ENCODE measurements at regions of chr15 and their contacts with region 1.

Region 1: DNA sequence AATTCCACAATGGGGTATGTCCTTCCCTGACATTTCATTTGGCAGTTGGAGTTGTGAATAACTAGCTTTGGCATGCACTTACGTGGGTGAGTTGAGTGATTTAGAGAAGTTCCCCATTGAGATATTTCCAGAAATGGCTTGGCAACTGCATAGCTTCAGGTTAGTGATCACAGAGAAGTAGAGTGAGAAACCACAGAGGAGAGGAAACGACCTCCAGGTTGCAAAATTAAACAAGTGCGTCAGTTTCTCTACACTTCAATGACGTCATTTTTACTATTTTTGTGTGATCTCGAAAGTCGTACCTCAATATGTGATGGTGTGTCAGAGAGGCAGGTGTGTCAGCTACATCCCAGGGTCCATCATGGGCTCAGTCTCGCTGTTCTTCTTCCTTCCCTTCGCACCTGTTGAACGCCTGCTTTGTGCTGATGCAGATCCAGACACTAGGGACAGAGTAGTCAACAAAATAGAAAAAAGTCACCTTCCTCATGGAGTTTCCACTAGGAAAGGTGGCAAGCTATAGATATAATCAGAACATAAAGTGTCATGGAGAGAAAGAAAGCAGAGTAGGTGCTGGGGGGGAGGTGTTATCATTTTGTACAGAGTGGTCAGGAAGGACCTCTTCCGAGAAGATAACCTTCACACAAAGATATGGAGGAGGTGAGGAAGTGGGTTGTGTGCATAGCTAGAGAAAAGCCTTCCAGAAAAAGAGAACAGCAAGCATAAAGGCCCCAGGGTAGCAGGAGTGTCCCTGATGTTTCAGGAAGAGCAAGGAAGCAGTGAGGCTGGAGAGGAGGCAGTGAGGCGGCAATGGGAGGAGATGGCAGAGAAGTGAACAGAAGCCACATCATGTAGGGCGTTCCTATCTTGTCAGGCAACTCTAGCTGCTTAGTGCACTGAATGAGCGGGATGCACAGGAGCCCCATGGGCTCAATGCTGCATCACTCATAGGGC is 75.6 kb downstream of the MCTP2 start:
- DNase-seq: peak; percentile 73
- ATAC-seq: peak; percentile 58
- H3K4me3 Mint-ChIP-seq: peak overlapping the region; percentile 56
- H3K27ac Mint-ChIP-seq: peak overlapping the region; percentile 96
- H3K4me1 Mint-ChIP-seq: peaks cover 81% of the 10 kb centered on the region
- H3K27me3 Mint-ChIP-seq: no peaks in the 10 kb centered on the region

Region 2: DNA sequence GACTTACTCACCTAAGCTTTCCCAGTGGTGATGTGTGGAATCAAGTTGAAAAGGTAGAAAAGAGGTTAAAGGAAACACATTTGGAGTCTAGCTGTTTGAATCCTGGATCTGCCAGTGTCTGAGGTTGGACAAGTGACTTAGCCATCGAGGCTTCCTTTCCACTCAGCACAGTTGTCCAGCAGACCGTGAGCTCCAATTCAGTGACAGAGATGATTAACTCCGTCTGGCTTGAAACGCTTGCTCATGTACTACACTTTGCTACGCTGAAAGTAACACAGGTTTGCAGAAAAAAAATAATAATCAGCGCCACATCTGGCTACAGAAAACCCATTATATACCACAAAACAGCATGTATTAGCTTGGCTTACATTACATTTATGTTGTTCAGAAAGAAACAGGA is 440.5 kb before region 1 on chr15:
- CTCF ChIA-PET with region 1: no interaction called
- DNase-seq: no peak
- ATAC-seq: no peak
- H3K4me3 Mint-ChIP-seq: no peak overlapping the region
- H3K27ac Mint-ChIP-seq: no peak overlapping the region
- H3K4me1 Mint-ChIP-seq: peaks cover 14% of the 10 kb centered on the region
- H3K27me3 Mint-ChIP-seq: peaks cover 36% of the 10 kb centered on the region

Region 3: DNA sequence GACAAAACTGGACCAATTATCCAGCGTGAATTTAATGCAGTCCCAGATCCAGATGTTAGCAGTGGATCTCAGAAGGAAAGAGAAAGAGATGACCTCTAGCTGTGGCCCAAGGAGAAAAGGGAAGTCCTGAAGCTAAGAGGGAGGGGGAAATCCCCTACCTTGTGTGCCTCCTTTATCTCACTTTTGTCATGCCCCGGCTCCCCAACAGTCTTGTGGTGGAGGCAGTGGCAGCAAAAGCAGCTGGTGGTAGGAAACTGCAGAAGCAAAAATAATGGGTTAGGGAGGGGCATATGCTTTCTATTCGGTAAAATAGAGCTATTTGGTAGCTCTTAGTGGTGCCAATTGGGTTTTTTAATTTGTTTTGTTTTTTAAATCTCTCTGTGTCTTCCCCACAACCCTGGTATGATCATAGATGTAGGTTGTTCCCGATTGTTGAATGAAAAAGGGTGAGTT is 19.2 kb before region 1 on chr15:
- CTCF ChIA-PET with region 1: interaction called, 12 read pairs
- DNase-seq: peak; percentile 87
- ATAC-seq: peak; percentile 94
- H3K4me3 Mint-ChIP-seq: peak overlapping the region; percentile 76
- H3K27ac Mint-ChIP-seq: peak overlapping the region; percentile 92
- H3K4me1 Mint-ChIP-seq: peaks cover 61% of the 10 kb centered on the region
- H3K27me3 Mint-ChIP-seq: no peaks in the 10 kb centered on the region